ENCODE measurements at regions of chr1 and their contacts with region 1.

Region 1: DNA sequence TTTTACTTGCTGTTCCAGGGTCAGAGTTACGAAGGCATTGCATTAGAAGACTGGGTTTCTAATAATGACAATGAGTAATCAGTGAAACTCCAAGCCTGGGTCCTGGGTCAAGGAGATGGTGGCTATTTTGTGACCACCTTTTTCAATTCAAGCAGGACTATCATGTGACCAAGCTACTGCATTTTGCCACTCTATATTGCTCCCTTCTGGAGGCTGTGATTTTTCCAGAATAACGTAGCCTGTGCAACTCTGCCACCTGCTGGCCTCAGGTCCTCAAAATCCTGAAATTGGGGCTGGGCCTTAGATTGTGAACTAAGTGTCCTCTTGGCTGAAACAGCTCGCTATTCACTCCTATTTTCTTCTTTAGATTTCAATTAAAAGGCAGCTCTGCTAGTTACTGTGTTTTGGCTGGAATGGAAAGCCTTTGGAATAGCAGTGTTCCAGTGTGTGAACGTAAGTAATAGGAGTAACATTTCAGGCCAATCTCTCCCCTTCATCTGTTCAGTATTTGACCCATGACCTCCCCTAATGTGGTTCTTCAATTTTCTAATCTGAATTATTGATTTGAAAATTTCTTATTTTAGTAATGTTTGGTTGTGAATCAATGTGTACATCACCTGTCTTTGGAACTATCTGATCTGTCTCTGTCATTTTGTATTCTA is 52.9 kb upstream of the CD46 start:
- DNase-seq: peak; percentile 61
- ATAC-seq: peak; percentile 91
- H3K4me3 Mint-ChIP-seq: no peak overlapping the region
- H3K27ac Mint-ChIP-seq: peak overlapping the region; percentile 46
- H3K4me1 Mint-ChIP-seq: peaks cover 11% of the 10 kb centered on the region
- H3K27me3 Mint-ChIP-seq: no peaks in the 10 kb centered on the region
- CTCF ChIP-seq: no peak; the same call in 1 of the 2 replicates

Region 2: GRCh38 chr1:207393610-207394009 is 305.3 kb before region 1 on chr1:
- CTCF ChIA-PET with region 1: no interaction called
- POLR2A ChIA-PET with region 1: no interaction called
- DNase-seq: no peak
- ATAC-seq: no peak
- H3K4me3 Mint-ChIP-seq: no peak overlapping the region
- H3K27ac Mint-ChIP-seq: no peak overlapping the region
- H3K4me1 Mint-ChIP-seq: peaks cover 4% of the 10 kb centered on the region; the same call in 1 of the 2 replicates
- H3K27me3 Mint-ChIP-seq: no peaks in the 10 kb centered on the region
- CTCF ChIP-seq: no peak

Region 3: DNA sequence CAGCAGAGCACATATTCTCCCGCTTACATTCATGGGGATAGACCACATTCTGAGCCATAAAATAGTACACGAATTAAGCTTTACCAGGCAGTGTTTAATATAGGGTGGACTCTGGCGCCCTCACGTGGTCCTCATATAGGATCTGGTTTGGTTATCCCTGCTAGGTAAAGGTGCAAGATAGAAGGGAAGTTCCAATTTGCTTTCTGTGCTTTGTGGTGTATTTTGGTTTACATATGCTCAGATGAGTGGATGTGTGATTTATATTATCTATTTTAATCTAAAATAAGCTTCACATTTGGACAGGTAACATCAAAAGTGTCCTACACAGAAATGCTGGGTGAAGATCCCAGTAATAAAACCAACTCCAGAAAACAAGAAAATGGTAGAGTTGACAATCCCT is 199.4 kb before region 1 on chr1:
- CTCF ChIA-PET with region 1: interaction called, 11 read pairs
- POLR2A ChIA-PET with region 1: no interaction called
- DNase-seq: peak; percentile 64
- ATAC-seq: peak; percentile 69
- H3K4me3 Mint-ChIP-seq: no peak overlapping the region
- H3K27ac Mint-ChIP-seq: no peak overlapping the region
- H3K4me1 Mint-ChIP-seq: peaks cover 11% of the 10 kb centered on the region
- H3K27me3 Mint-ChIP-seq: peaks cover 29% of the 10 kb centered on the region
- CTCF ChIP-seq: peak; percentile 60

Region 4: GRCh38 chr1:207579436-207579799 is 119.5 kb before region 1 on chr1:
- CTCF ChIA-PET with region 1: interaction called, 10 read pairs
- POLR2A ChIA-PET with region 1: no interaction called
- DNase-seq: peak; percentile 72
- ATAC-seq: peak; percentile 98
- H3K4me3 Mint-ChIP-seq: no peak overlapping the region
- H3K27ac Mint-ChIP-seq: 0 out of 2 replicates have a peak overlapping the region, but pooled peaks have one; percentile 18
- H3K4me1 Mint-ChIP-seq: peaks cover 23% of the 10 kb centered on the region
- H3K27me3 Mint-ChIP-seq: no peaks in the 10 kb centered on the region; the same call in 1 of the 2 replicates
- CTCF ChIP-seq: 0 out of 2 replicates have a peak, but pooled peaks have one; percentile 24

Region 5: DNA sequence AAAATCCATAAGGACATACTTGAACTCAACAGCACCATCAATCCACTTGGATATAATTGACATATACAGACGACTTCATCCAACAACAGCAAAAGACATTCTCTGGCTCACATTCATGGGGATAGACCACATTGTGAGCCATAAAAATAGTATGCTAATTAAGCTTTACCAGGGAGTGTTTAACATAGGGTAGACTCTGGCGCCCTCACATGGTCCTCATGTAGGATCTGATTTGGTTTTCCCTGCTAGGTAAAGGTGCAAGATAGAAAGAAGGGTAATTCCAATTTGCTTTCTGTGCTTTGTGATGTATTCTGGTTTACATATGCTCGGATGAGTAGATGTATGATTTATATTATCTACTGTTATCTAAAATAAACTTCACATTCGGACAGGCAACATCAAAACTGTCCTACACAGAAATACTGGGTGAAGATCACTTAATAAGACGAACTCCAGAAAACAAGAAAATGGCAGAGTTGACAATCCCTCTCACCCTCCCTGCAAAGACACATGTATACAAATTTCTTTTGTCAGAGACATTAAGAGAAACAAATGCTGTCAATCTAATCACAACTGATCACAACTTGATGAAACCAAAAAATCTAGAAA is 26.3 kb before region 1 on chr1:
- CTCF ChIA-PET with region 1: interaction called, 10 read pairs
- POLR2A ChIA-PET with region 1: no interaction called
- DNase-seq: peak; percentile 47
- ATAC-seq: peak; percentile 89
- H3K4me3 Mint-ChIP-seq: no peak overlapping the region
- H3K27ac Mint-ChIP-seq: no peak overlapping the region; the same call in 1 of the 2 replicates
- H3K4me1 Mint-ChIP-seq: peaks cover 40% of the 10 kb centered on the region
- H3K27me3 Mint-ChIP-seq: peaks cover 25% of the 10 kb centered on the region
- CTCF ChIP-seq: peak; percentile 37; the same call in 1 of the 2 replicates

Region 6: DNA sequence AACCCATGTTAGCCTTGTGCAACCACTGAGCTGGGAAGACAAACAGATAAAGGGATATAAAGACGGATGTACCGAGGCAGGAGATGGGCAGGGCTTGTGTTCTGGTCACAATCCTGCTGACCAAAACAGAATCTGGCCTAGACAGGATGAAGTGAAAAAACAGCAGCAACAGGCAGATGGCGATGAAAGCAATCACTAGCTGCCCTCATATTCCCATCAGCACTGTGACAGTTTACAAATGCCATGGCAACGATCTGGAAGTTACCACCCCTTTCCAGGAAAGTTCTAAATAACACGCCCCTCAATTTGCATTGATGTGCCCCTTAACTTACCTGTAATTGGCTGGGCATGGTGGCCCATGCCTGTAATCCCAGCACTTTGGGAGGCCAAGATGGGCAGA is 12.3 kb after region 1 on chr1:
- CTCF ChIA-PET with region 1: interaction called, 14 read pairs
- POLR2A ChIA-PET with region 1: no interaction called
- DNase-seq: peak; percentile 22
- ATAC-seq: peak; percentile 87
- H3K4me3 Mint-ChIP-seq: no peak overlapping the region
- H3K27ac Mint-ChIP-seq: 0 out of 2 replicates have a peak overlapping the region, but pooled peaks have one; percentile 6
- H3K4me1 Mint-ChIP-seq: peaks cover 16% of the 10 kb centered on the region
- H3K27me3 Mint-ChIP-seq: no peaks in the 10 kb centered on the region
- CTCF ChIP-seq: no peak

Measured in WTC11 (cell line).